Natural killer cell (primary cell): ENCODE measurements at regions of chr12 and their contacts with region 1.

Region 1: GRCh38 chr12:64696080-64696741 is 63.0 kb downstream of the GNS start:
- DNase-seq: peak in 1 of 2 donors; percentile 54
- ATAC-seq: no peak
- H3K4me3 ChIP-seq: no peak overlapping the region
- H3K4me3 Mint-ChIP-seq: peak overlapping the region; percentile 42
- H3K27ac ChIP-seq: no peak overlapping the region
- H3K27ac Mint-ChIP-seq: peak overlapping the region; percentile 58 to 70
- H3K4me1 ChIP-seq: peaks cover 35% of the 10 kb centered on the region
- H3K4me1 Mint-ChIP-seq: peaks cover 58 to 67% of the 10 kb centered on the region in 2 donors
- H3K27me3 ChIP-seq: no peaks in the 10 kb centered on the region
- H3K27me3 Mint-ChIP-seq: no peaks in the 10 kb centered on the region
- CTCF ChIP-seq: no peak

Region 2: GRCh38 chr12:64469455-64470142 is 226.6 kb before region 1 on chr12:
- intact Hi-C with region 1: no loop called
- DNase-seq: no peak
- ATAC-seq: no peak
- H3K4me3 ChIP-seq: no peak overlapping the region
- H3K4me3 Mint-ChIP-seq: no peak overlapping the region
- H3K27ac ChIP-seq: no peak overlapping the region
- H3K27ac Mint-ChIP-seq: peak overlapping the region; percentile 37 to 68
- H3K4me1 ChIP-seq: no peaks in the 10 kb centered on the region
- H3K4me1 Mint-ChIP-seq: peaks cover 25 to 30% of the 10 kb centered on the region in 2 donors
- H3K27me3 ChIP-seq: no peaks in the 10 kb centered on the region
- H3K27me3 Mint-ChIP-seq: no peaks in the 10 kb centered on the region
- CTCF ChIP-seq: no peak

Region 3: DNA sequence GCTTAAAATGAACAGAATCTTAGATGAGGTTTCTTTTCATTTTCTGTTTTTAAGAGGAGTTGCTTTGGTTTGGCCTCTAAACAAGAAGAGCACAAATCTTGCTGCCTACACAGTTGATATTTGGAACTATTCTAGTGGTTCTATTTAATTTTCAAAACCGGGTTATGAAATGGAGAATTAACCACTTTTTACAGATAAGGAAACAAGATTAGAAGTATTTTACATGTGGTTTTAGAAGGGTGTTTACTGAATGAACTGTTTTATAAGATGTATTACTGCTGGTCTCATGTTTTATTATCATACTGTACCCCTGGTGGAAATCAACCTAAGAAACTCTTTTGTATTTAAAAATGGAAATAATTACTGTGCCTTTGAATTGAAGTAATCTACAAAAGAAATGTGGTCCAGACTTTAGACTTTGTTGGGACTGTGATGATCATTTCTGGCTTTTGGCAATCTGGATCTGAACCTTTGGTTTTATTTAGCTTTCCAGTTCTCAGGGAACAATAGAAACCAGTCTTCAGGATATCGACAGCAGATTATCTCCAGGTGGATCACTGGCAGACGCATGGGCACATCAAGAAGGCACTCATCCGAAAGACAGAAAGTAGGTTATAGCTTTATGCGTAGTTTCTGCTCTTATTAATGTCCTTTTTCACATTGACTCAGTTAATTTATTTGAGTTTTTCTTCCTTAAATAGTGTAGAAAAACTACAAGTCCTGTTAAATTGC is 201.0 kb before region 1 on chr12:
- intact Hi-C with region 1: no loop called
- DNase-seq: no peak
- ATAC-seq: peak in 1 of 3 donors; percentile 46
- H3K4me3 ChIP-seq: no peak overlapping the region
- H3K4me3 Mint-ChIP-seq: peak overlapping the region; percentile 9
- H3K27ac ChIP-seq: no peak overlapping the region
- H3K27ac Mint-ChIP-seq: peak overlapping the region; percentile 65 to 76
- H3K4me1 ChIP-seq: no peaks in the 10 kb centered on the region
- H3K4me1 Mint-ChIP-seq: peaks cover 7 to 10% of the 10 kb centered on the region in 2 donors
- H3K27me3 ChIP-seq: no peaks in the 10 kb centered on the region
- H3K27me3 Mint-ChIP-seq: no peaks in the 10 kb centered on the region
- CTCF ChIP-seq: no peak

Region 4: GRCh38 chr12:64544371-64545080 is 151.7 kb before region 1 on chr12:
- intact Hi-C with region 1: loop called (anchors 1 kb)
- DNase-seq: no peak
- ATAC-seq: no peak
- H3K4me3 ChIP-seq: no peak overlapping the region
- H3K4me3 Mint-ChIP-seq: no peak overlapping the region
- H3K27ac ChIP-seq: no peak overlapping the region
- H3K27ac Mint-ChIP-seq: no peak overlapping the region
- H3K4me1 ChIP-seq: no peaks in the 10 kb centered on the region
- H3K4me1 Mint-ChIP-seq: peaks cover 2% of the 10 kb centered on the region in 2 donors
- H3K27me3 ChIP-seq: peaks cover 2% of the 10 kb centered on the region
- H3K27me3 Mint-ChIP-seq: no peaks in the 10 kb centered on the region
- CTCF ChIP-seq: no peak

Region 5: DNA sequence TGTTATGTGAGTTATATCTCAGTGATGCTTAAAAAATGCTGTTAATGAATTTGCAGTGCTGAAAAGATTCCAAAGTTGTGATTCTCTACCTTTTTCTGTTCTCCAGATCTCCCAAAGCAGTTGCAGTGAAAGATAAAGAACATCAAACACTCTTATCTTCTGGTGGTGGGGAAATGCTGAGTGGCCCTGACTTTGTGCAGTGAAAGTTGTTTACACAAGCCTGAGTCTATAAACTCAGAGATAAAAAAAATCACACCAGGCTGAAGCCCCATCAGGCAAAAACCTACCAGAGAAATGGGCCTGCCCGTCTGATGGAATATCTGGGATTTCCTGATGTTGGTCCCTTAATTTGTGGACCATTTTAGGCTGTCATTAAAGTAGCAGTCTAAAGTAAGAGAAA is 39.8 kb before region 1 on chr12:
- intact Hi-C with region 1: loop called (anchors 5 kb)
- DNase-seq: peak in 1 of 2 donors; percentile 14
- ATAC-seq: no peak
- H3K4me3 ChIP-seq: no peak overlapping the region
- H3K4me3 Mint-ChIP-seq: peak overlapping the region; percentile 25
- H3K27ac ChIP-seq: no peak overlapping the region
- H3K27ac Mint-ChIP-seq: peak overlapping the region; percentile 90 to 98
- H3K4me1 ChIP-seq: peaks cover 47% of the 10 kb centered on the region
- H3K4me1 Mint-ChIP-seq: peaks cover 69 to 75% of the 10 kb centered on the region in 2 donors
- H3K27me3 ChIP-seq: no peaks in the 10 kb centered on the region
- H3K27me3 Mint-ChIP-seq: no peaks in the 10 kb centered on the region
- CTCF ChIP-seq: no peak